Sigmoid colon (tissue), 7 donors: ENCODE measurements at regions of chr20 and their contacts with region 1.

Region 1: GRCh38 chr20:21147593-21147992 is 21.7 kb downstream of the KIZ start:
- DNase-seq: no peak
- H3K4me3 ChIP-seq: no peak overlapping the region
- H3K27ac ChIP-seq: no peak overlapping the region
- H3K4me1 ChIP-seq: peaks cover 0 to 25% (median 10%) of the 10 kb centered on the region in 4 donors
- H3K27me3 ChIP-seq: no peaks in the 10 kb centered on the region
- CTCF ChIP-seq: no peak
- EP300 ChIP-seq: no peak
- POLR2A ChIP-seq: no peak

Region 2: GRCh38 chr20:21105429-21106170 is 42.0 kb before region 1 on chr20:
- intact Hi-C with region 1: no loop called
- DNase-seq: no peak
- H3K4me3 ChIP-seq: peak overlapping the region in 3 of 4 donors; percentile 9 to 38 (median 30)
- H3K27ac ChIP-seq: no peak overlapping the region
- H3K4me1 ChIP-seq: peaks cover 0 to 48% (median 45%) of the 10 kb centered on the region in 4 donors
- H3K27me3 ChIP-seq: peaks cover 66 to 77% (median 70%) of the 10 kb centered on the region in 3 donors
- CTCF ChIP-seq: no peak
- EP300 ChIP-seq: no peak
- POLR2A ChIP-seq: no peak

Region 3: DNA sequence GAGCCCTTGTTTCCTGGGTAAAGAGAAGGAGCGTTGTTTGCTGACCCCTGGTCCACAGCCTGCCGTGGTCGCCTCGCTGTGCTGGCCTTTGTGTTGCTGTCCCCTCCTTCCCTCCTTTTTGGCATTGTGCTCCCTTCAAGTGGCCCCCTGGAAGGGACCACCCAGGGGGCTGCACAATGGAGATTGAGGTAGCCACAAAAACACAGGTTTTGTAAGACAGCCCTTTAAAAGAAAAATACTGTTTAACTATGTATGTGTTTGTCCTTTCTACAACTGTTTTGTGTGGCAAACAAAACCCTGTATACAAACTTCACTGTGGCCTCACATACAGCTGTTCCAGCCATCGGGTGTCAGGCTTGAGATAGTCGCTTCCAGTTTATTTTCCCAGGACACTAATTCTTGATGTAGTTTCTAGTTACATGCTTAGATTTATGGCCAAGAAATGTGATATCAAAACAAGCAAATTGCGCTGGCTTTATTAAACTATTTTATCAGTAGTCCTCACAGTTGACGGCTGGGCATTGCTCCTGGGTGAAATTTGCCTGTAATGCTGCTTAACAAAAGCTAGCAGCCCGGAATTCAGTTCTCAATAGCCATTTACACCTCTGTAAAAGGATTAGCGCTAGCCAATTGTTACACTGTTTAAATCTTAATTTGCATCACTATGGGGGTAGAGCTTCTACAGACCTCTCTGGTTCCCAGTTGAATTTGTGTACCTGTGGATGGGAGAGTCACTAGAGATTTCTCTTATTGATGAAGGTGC is 42.3 kb after region 1 on chr20:
- intact Hi-C with region 1: loop called (anchors 5 kb)
- DNase-seq: no peak
- H3K4me3 ChIP-seq: no peak overlapping the region
- H3K27ac ChIP-seq: peak overlapping the region in 3 of 4 donors; percentile 64 to 72 (median 70)
- H3K4me1 ChIP-seq: peaks cover 0 to 24% (median 20%) of the 10 kb centered on the region in 4 donors
- H3K27me3 ChIP-seq: no peaks in the 10 kb centered on the region
- CTCF ChIP-seq: no peak
- EP300 ChIP-seq: no peak
- POLR2A ChIP-seq: no peak

Region 4: GRCh38 chr20:21202284-21202683 is 54.7 kb after region 1 on chr20:
- intact Hi-C with region 1: loop called (anchors 5 kb)
- DNase-seq: no peak
- H3K4me3 ChIP-seq: no peak overlapping the region
- H3K27ac ChIP-seq: peak overlapping the region in 1 of 4 donors; percentile 30
- H3K4me1 ChIP-seq: peaks cover 0 to 10% (median 8%) of the 10 kb centered on the region in 4 donors
- H3K27me3 ChIP-seq: no peaks in the 10 kb centered on the region
- CTCF ChIP-seq: no peak
- EP300 ChIP-seq: no peak
- POLR2A ChIP-seq: no peak

Region 5: GRCh38 chr20:21303872-21304586 is 156.4 kb after region 1 on chr20:
- intact Hi-C with region 1: no loop called
- DNase-seq: no peak
- H3K4me3 ChIP-seq: peak overlapping the region; percentile 76 to 98 (median 92)
- H3K27ac ChIP-seq: peak overlapping the region; percentile 91 to 98 (median 94)
- H3K4me1 ChIP-seq: peaks cover 0 to 26% (median 18%) of the 10 kb centered on the region in 4 donors
- H3K27me3 ChIP-seq: no peaks in the 10 kb centered on the region
- CTCF ChIP-seq: peak in 1 of 4 experiments; percentile 12
- EP300 ChIP-seq: no peak
- POLR2A ChIP-seq: no peak